Activated CD4-positive, alpha-beta T cell treated with anti-CD3 and anti-CD28 coated beads, Interleukin-2, amount 10 ng/mL, durations not matched to agents 7 days and 5 days (primary cell): ENCODE measurements at regions of chr2 and their contacts with region 1.

Region 1: DNA sequence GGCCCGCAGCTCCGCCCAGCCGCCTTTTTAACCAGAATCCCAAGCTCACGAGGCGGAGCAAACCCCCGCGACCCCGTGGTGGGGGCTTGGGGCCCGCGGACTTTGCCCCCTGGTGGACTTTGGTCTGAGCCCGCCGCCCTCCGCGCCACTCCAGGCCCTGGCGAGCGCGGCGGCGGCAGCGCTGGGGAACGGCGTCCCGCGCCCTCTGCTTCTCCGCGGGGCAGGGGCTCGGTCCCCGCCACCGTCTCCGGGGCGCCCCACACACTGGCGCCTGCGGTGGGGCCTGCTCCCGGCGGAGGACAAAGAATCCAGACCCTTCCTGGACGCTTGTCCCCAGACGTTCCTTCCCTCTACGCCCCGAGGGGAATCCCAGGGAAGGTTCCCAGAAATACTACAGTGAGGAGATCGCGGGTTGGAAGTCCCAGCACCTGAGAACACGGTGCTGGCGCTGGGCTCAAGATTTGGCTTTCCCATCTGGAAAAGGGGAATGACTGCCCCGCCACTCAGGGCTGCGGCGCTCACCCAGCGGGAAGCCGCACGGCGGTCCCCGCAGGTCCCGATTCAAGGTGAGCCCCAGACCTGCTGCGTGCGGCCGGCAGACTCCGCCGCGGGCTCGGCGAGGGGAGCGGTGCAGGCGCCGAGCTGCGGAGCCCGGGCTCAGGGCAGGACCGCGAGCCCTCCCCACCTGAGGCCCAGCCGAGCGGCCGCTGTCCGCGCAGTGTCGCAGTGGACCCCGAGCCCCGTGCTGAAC is at the start of gene HAAO:
- DNase-seq: no peak
- H3K4me3 Mint-ChIP-seq: peak within 1 kb of the TSS; percentile 67
- H3K27ac Mint-ChIP-seq: no peak within 1 kb of the TSS
- H3K4me1 Mint-ChIP-seq: peaks cover 22% of the 10 kb centered on the region
- H3K27me3 Mint-ChIP-seq: peaks cover 43% of the 10 kb centered on the region
- total RNA-seq, gene HAAO: not detected

Region 2: DNA sequence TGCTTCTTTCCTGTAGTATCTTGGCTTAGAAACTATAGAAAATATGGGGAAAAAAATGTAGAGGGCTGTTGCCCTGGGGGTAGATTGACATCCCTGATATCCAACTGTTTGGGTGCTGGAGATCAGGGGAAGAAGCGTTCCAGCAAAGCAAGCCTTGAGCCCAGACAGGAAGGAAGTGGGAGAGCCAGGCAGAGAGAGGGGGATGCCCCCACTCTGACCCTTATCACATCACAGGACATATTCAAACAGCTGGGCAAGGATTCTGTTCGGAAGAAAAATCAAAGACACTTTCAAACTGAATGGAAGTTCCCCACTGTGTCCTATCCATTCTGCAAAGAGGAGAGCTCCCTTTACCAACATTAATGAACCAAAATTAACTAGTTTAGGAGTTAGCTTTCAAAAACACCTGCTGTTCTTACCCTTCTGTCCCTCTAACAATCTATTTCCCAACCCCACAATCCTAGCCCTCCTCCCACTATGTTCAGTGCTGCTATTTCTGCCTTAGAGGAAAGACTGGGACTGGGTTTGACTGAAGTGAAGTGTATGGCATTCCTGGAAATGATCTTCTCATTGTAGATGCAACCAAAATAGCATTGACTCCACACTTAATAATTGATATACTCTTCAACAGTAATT is 282.0 kb before region 1 on chr2:
- CTCF ChIA-PET with region 1: interaction called, 10 read pairs
- POLR2A ChIA-PET with region 1: no interaction called
- DNase-seq: no peak
- H3K4me3 Mint-ChIP-seq: no peak overlapping the region
- H3K27ac Mint-ChIP-seq: no peak overlapping the region
- H3K4me1 Mint-ChIP-seq: peaks cover 10% of the 10 kb centered on the region
- H3K27me3 Mint-ChIP-seq: no peaks in the 10 kb centered on the region

Region 3: DNA sequence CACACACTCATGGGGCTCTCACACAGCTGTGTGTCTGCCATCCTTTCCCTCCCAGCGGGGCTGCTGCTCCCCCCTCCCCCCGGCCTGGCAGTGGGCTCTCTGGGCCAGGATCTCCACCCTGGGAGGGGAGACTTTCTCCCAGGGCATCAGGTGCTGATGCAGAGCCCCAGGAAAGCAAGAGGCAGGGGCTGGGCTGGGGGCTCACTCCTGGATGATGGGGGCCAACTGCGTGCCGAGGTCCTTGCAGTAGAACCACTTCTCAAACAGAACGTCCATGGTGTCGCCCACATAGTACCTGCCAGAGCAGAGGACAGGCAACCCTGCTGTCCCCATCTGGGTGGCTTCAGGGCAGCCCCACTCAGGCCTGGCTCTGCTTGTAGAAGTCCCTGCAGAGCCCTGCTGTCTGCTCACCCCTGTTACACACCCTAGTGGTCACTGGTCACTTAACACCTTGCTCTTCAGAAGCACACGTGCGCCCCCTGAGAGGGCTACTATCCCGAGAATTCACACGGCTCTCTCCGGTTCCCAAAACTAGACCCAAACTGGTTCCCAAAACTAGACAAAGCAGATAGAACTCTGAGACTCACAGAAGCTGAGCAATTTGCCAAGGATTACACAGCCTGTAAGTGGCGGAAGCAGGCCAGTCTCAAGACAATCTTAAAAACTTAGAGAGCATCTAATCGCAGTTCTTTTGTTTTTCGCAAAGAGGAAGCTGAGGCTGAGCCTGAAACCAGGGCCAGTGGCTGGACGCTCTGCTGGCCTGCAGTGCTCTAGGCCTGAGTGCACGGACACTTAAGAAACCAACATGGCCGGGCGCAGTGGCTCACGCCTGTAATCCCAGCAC is 22.2 kb before region 1 on chr2:
- CTCF ChIA-PET with region 1: no interaction called
- POLR2A ChIA-PET with region 1: no interaction called
- DNase-seq: no peak
- H3K4me3 Mint-ChIP-seq: no peak overlapping the region
- H3K27ac Mint-ChIP-seq: no peak overlapping the region
- H3K4me1 Mint-ChIP-seq: peaks cover 5% of the 10 kb centered on the region
- H3K27me3 Mint-ChIP-seq: no peaks in the 10 kb centered on the region